Sigmoid colon (tissue), 7 donors: ENCODE measurements at regions of chr21 and their contacts with region 1.

Region 1: GRCh38 chr21:41953831-41954653 is at the start of gene C2CD2:
- DNase-seq: peak; percentile 83
- H3K4me3 ChIP-seq: peak within 1 kb of the TSS; percentile 54 to 96 (median 84)
- H3K27ac ChIP-seq: peak within 1 kb of the TSS; percentile 59 to 87 (median 76)
- H3K4me1 ChIP-seq: peaks cover 0 to 59% (median 42%) of the 10 kb centered on the region in 4 donors
- H3K27me3 ChIP-seq: no peaks in the 10 kb centered on the region
- CTCF ChIP-seq: no peak
- EP300 ChIP-seq: no peak
- POLR2A ChIP-seq: no peak
- total RNA-seq, gene C2CD2: 19.0 to 45.1 (median 22.2) TPM

Region 2: GRCh38 chr21:41663801-41664788 is 289.9 kb before region 1 on chr21:
- intact Hi-C with region 1: no loop called
- DNase-seq: no peak
- H3K4me3 ChIP-seq: no peak overlapping the region
- H3K27ac ChIP-seq: no peak overlapping the region
- H3K4me1 ChIP-seq: peaks cover 0 to 7% (median 0%) of the 10 kb centered on the region in 4 donors
- H3K27me3 ChIP-seq: peaks cover 0 to 10% (median 0%) of the 10 kb centered on the region in 3 donors
- CTCF ChIP-seq: no peak
- EP300 ChIP-seq: no peak
- POLR2A ChIP-seq: no peak

Region 3: GRCh38 chr21:41933313-41934086 is 20.5 kb before region 1 on chr21:
- intact Hi-C with region 1: loop called (anchors 2 kb)
- DNase-seq: peak; percentile 78
- H3K4me3 ChIP-seq: peak overlapping the region; percentile 3 to 44 (median 42)
- H3K27ac ChIP-seq: peak overlapping the region; percentile 53 to 90 (median 86)
- H3K4me1 ChIP-seq: peaks cover 0 to 32% (median 30%) of the 10 kb centered on the region in 4 donors
- H3K27me3 ChIP-seq: no peaks in the 10 kb centered on the region
- CTCF ChIP-seq: peak in 1 of 4 experiments; percentile 37
- EP300 ChIP-seq: no peak
- POLR2A ChIP-seq: no peak

Region 4: GRCh38 chr21:42004406-42005199 is 50.6 kb after region 1 on chr21:
- intact Hi-C with region 1: loop called (anchors 1 kb)
- DNase-seq: no peak
- H3K4me3 ChIP-seq: no peak overlapping the region
- H3K27ac ChIP-seq: no peak overlapping the region
- H3K4me1 ChIP-seq: peaks cover 0 to 22% (median 11%) of the 10 kb centered on the region in 4 donors
- H3K27me3 ChIP-seq: no peaks in the 10 kb centered on the region
- CTCF ChIP-seq: no peak
- EP300 ChIP-seq: no peak
- POLR2A ChIP-seq: no peak